Activated naive CD4-positive, alpha-beta T cell treated with anti-CD3 and anti-CD28 coated beads for 36 hours (primary cell): ENCODE measurements at regions of chr4 and their contacts with region 1.

Region 1: DNA sequence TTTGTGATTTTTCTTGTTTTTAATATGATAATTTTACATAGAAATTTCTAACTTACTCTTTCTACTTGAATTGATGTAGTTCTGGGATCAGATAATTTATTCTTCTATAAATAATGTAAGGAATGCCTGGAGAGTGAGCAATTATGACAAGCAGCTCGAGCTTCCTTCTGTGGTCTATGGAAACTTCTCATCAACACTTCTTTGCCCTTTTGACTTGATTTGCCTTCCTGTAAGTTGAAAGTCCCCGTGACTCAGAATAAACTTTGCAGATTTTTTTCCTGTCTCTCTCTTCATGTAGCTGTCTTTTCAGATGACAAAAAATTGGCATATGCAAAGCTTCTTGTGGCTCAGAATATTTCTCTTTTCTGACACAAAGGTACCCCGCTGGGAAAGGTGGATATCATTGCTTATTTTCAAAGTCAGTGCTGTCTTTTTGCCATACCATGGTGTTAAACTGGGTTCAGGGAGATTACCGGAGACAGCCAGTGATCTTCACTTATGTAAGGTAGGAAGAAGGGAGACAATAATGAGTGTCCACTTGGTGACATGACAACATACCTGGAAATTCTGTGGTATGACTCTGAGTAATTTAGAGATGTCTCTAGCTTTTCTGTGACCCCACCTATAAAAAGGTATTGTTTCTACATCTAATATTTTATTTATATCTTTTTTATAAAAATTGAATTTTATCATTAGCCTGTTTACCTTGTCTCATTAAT is 278.6 kb upstream of the GNPDA2 start:
- DNase-seq: no peak
- H3K4me3 Mint-ChIP-seq: no peak overlapping the region
- H3K27ac Mint-ChIP-seq: no peak overlapping the region
- H3K4me1 Mint-ChIP-seq: no peaks in the 10 kb centered on the region
- H3K27me3 Mint-ChIP-seq: no peaks in the 10 kb centered on the region

Region 2: GRCh38 chr4:44961001-44961755 is 43.8 kb before region 1 on chr4:
- CTCF ChIA-PET with region 1: no interaction called
- intact Hi-C with region 1: loop called (anchors 10 kb)
- DNase-seq: no peak
- H3K4me3 Mint-ChIP-seq: no peak overlapping the region
- H3K27ac Mint-ChIP-seq: no peak overlapping the region
- H3K4me1 Mint-ChIP-seq: no peaks in the 10 kb centered on the region
- H3K27me3 Mint-ChIP-seq: no peaks in the 10 kb centered on the region

Region 3: DNA sequence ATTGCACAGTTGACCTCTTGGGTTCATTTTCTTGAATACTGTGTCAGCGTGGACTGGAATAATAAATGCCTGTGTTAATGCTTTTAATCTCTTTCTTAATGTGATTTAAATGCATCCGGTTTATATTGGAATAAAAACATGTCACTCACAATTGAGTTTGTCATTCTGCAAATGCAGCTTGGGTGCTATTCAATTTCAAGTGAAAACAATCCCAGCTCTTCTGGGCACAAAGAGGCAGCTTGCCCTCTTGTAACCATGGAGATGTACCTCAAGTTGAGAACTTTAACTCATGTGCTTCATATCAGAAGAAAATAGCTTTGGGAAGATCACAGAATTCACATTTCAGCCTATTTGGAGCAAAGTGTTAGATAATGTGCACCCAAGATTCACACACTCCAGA is 77.1 kb after region 1 on chr4:
- CTCF ChIA-PET with region 1: no interaction called
- intact Hi-C with region 1: no loop called
- DNase-seq: no peak
- H3K4me3 Mint-ChIP-seq: no peak overlapping the region
- H3K27ac Mint-ChIP-seq: no peak overlapping the region
- H3K4me1 Mint-ChIP-seq: no peaks in the 10 kb centered on the region
- H3K27me3 Mint-ChIP-seq: no peaks in the 10 kb centered on the region